Adrenal gland (tissue), 19 donors: ENCODE measurements at regions of chr4 and their contacts with region 1.

Region 1: GRCh38 chr4:56575820-56576429 is 70.3 kb downstream of the ARL9 start:
- DNase-seq: no peak
- H3K4me3 ChIP-seq: no peak overlapping the region
- H3K27ac ChIP-seq: no peak overlapping the region
- H3K4me1 ChIP-seq: no peaks in the 10 kb centered on the region
- H3K27me3 ChIP-seq: no peaks in the 10 kb centered on the region
- CTCF ChIP-seq: peak; percentile 24 to 58 (median 56)
- POLR2A ChIP-seq: no peak

Region 2: GRCh38 chr4:56728512-56728911 is 152.6 kb after region 1 on chr4:
- intact Hi-C with region 1: no loop called
- DNase-seq: peak; percentile 34 to 84 (median 75)
- H3K4me3 ChIP-seq: no peak overlapping the region
- H3K27ac ChIP-seq: peak overlapping the region in 1 of 5 donors; percentile 63
- H3K4me1 ChIP-seq: no peaks in the 10 kb centered on the region
- H3K27me3 ChIP-seq: no peaks in the 10 kb centered on the region
- CTCF ChIP-seq: no peak
- POLR2A ChIP-seq: no peak

Region 3: GRCh38 chr4:56799824-56800756 is 224.2 kb after region 1 on chr4:
- intact Hi-C with region 1: loop called in 1 of 2 experiments (anchors 10 kb)
- DNase-seq: peak; percentile 86 to 95 (median 89)
- H3K4me3 ChIP-seq: peak overlapping the region in 3 of 4 donors; percentile 5 to 61 (median 35)
- H3K27ac ChIP-seq: peak overlapping the region in 3 of 5 donors; percentile 72 to 79 (median 76)
- H3K4me1 ChIP-seq: peaks cover 6 to 8% of the 10 kb centered on the region in 2 donors
- H3K27me3 ChIP-seq: no peaks in the 10 kb centered on the region
- CTCF ChIP-seq: peak; percentile 72 to 95 (median 90)
- POLR2A ChIP-seq: no peak